ENCODE measurements at regions of chr5 and their contacts with region 1.

Region 1: DNA sequence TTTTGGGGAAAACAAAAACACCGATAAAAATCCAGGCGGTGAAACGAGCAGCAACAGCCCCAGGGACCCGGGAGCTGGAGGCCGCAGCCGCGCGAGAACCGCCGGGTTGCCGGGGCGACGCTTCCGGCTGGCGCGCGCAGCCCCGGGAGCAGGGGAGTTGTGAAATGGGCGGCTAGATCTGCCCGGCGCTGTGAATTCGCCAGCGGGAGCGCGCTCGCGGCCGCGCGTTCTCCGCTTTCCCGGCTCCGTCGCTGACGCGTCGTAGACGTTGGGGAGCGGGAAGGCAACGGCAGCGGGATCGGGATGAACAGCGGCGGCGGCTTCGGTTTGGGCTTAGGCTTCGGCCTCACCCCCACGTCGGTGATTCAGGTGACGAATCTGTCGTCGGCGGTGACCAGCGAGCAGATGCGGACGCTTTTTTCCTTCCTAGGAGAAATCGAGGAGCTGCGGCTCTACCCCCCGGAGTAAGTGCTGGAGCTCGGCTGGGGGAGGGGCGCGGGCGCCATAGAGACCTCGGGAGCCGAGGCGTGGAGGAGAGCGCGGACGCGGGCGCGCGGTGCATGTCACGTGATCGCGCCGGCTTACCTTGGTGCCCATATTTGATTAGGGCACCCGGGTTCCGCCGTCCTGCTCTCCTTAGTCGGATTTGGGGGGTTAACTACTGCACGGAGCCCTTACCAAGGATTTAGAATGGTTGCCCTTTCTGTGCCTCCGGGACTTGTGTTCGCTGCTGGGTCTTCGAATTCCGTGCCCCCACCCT is at the start of gene SREK1:
- DNase-seq: peak; percentile 76 to 94 (median 84)
- ATAC-seq: peak; percentile 84
- H3K4me3 ChIP-seq: peak within 1 kb of the TSS; percentile 94
- H3K4me3 Mint-ChIP-seq: peak within 1 kb of the TSS; percentile 100
- H3K27ac ChIP-seq: peak within 1 kb of the TSS; percentile 97 to 100
- H3K27ac Mint-ChIP-seq: peak within 1 kb of the TSS; percentile 100
- H3K4me1 ChIP-seq: peaks cover 10% of the 10 kb centered on the region
- H3K4me1 Mint-ChIP-seq: peaks cover 49% of the 10 kb centered on the region
- H3K27me3 ChIP-seq: no peaks in the 10 kb centered on the region
- H3K27me3 Mint-ChIP-seq: no peaks in the 10 kb centered on the region
- CTCF ChIP-seq: no peak
- total RNA-seq, gene SREK1: 137 to 155 TPM

Region 2: GRCh38 chr5:65624571-65625555 is 519.4 kb before region 1 on chr5 and contains the starts of genes SHLD3 and TRAPPC13:
- CTCF ChIA-PET with region 1: no interaction called
- POLR2A ChIA-PET with region 1: interaction called, 8 read pairs
- intact Hi-C with region 1: loop called in 1 of 2 experiments (anchors 5 kb)
- DNase-seq: peak; percentile 67 to 94 (median 76)
- ATAC-seq: peak; percentile 72
- H3K4me3 ChIP-seq: peak within 1 kb of the TSS; percentile 67
- H3K4me3 Mint-ChIP-seq: peak within 1 kb of the TSS; percentile 99
- H3K27ac ChIP-seq: peak within 1 kb of the TSS; percentile 85 to 87
- H3K27ac Mint-ChIP-seq: peak within 1 kb of the TSS; percentile 99
- H3K4me1 ChIP-seq: peaks cover 29% of the 10 kb centered on the region
- H3K4me1 Mint-ChIP-seq: peaks cover 63% of the 10 kb centered on the region
- H3K27me3 ChIP-seq: no peaks in the 10 kb centered on the region
- H3K27me3 Mint-ChIP-seq: no peaks in the 10 kb centered on the region
- CTCF ChIP-seq: peak; percentile 29
- total RNA-seq, gene SHLD3: 11.5 to 11.7 TPM
- total RNA-seq, gene TRAPPC13: 11.2 to 14.4 TPM

Region 3: DNA sequence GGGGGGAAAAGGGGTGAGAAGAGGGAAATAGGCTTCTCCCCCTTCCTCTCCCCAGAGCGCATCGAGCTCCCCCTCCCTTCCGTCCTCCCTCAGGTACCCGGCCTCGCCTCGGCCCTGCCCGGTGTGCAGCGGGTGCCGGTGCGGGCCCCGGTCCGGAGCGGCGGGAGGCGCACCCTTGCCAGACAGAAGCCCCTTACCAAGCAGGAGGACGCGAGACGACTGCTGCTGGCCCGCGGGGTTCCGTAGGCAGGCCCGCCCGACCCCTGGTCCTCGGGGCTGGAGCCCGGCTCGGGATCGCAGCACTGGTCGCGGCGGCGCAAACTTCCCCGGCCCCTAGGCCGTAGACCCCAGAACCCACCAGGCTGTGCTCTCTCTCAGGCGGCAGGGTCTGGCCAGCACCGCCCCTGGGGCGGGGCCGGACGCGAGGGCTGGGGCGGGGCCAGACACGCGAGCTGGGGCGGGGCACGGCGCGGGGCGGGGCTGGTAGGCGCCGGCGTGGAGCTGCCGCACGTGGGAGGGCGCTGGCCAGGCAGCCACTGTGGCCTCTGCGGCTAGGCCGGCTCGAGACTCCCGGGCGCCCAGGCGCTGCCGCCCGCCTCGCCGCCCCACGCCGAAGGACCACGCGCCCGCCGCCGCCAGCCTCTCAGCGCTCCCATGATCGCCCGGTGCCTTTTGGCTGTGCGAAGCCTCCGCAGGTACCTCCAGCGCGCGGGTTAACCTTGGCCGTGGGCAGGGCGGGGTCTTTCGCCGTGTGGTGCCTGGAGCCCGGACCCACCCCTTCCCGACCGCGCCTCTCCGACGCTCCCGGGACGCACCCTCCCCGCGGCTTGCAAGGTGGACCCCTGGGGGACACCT is 422.3 kb before region 1 on chr5 and contains the starts of genes NLN and SGTB:
- CTCF ChIA-PET with region 1: no interaction called
- POLR2A ChIA-PET with region 1: interaction called, 31 read pairs
- intact Hi-C with region 1: loop called (anchors 5 kb)
- DNase-seq: peak; percentile 70 to 92 (median 82)
- ATAC-seq: peak; percentile 86
- H3K4me3 ChIP-seq: peak within 1 kb of the TSS; percentile 88
- H3K4me3 Mint-ChIP-seq: peak within 1 kb of the TSS; percentile 95
- H3K27ac ChIP-seq: peak within 1 kb of the TSS; percentile 83 to 97
- H3K27ac Mint-ChIP-seq: peak within 1 kb of the TSS; percentile 86
- H3K4me1 ChIP-seq: peaks cover 32% of the 10 kb centered on the region
- H3K4me1 Mint-ChIP-seq: peaks cover 26% of the 10 kb centered on the region
- H3K27me3 ChIP-seq: no peaks in the 10 kb centered on the region
- H3K27me3 Mint-ChIP-seq: no peaks in the 10 kb centered on the region
- CTCF ChIP-seq: no peak
- total RNA-seq, gene NLN: 1.4 to 2.5 TPM
- total RNA-seq, gene SGTB: 84.2 to 93.7 TPM

Region 4: DNA sequence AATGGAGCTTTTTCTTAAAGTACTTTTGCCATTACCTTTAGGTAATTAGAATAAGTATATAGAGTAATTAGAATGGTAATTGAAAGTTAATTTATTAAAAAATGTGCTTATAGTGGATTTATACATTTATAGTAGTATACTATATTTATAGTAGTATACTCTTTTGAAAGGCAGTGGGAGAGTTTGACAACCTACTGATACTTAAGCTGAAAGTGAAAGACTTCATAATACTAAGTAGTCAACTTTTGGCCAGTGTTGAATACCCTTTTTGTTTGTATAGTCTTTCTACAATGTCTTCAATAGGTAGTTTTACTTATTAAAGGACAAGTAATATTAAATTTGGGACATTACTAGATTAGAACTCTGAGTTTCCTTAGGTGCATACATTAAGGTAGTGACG is 12.8 kb after region 1 on chr5:
- CTCF ChIA-PET with region 1: no interaction called
- POLR2A ChIA-PET with region 1: interaction called, 12 read pairs
- intact Hi-C with region 1: no loop called
- DNase-seq: no peak
- ATAC-seq: no peak
- H3K4me3 ChIP-seq: no peak overlapping the region
- H3K4me3 Mint-ChIP-seq: no peak overlapping the region
- H3K27ac ChIP-seq: no peak overlapping the region
- H3K27ac Mint-ChIP-seq: no peak overlapping the region
- H3K4me1 ChIP-seq: no peaks in the 10 kb centered on the region
- H3K4me1 Mint-ChIP-seq: peaks cover 24% of the 10 kb centered on the region
- H3K27me3 ChIP-seq: no peaks in the 10 kb centered on the region
- H3K27me3 Mint-ChIP-seq: no peaks in the 10 kb centered on the region
- CTCF ChIP-seq: no peak

Region 5: DNA sequence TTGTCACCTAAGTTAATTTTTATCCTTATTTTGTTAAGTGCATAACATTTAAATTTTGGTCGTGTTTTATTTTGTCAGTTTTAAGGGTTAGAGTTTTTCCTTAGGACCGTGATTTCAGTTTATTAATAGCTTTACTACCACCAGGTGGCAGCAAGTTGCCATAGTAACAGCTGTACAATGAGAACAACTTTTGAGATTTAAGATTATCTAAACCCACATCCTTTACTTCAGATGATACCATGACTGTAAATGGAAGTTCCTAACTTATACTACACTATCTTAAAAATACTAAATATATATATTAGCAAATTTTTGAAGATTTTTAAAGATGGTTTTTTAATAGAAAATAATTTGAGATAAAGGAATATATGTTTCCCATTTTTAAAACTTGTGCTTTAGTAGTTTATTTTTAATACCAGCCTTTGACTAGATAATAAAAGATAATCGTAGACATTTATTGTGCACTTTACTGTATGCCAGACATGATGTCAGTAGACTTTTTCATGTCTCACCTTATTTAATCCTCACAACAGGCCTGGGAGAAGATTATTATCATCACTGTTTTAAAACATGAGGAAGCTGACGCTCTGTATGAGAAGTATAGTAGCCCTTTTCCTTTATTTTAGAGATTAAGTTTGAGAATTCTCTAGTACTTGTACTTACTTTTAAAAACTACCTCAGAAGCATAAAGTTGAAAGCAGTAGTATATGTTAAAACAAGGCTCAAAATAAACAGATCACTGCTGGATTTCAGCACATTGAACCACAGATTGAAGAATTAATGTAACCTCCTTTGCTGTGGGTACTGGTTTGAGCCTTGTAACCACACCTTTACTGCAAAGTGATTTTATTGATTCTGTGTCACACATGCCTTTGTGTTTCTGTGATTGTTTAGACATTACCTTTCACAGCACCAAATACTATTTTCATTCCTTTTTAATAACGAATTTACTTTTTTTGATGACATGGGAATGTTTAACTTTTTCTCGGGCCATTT is 27.4 kb after region 1 on chr5:
- CTCF ChIA-PET with region 1: interaction called, 3 read pairs
- POLR2A ChIA-PET with region 1: interaction called, 10 read pairs
- intact Hi-C with region 1: loop called (anchors 1 to 2 kb)
- DNase-seq: peak; percentile 20 to 89 (median 44)
- ATAC-seq: peak; percentile 68
- H3K4me3 ChIP-seq: no peak overlapping the region
- H3K4me3 Mint-ChIP-seq: peak overlapping the region; percentile 36
- H3K27ac ChIP-seq: peak overlapping the region in 1 of 2 donors; percentile 6
- H3K27ac Mint-ChIP-seq: peak overlapping the region; percentile 85
- H3K4me1 ChIP-seq: no peaks in the 10 kb centered on the region
- H3K4me1 Mint-ChIP-seq: peaks cover 41% of the 10 kb centered on the region
- H3K27me3 ChIP-seq: no peaks in the 10 kb centered on the region
- H3K27me3 Mint-ChIP-seq: no peaks in the 10 kb centered on the region
- CTCF ChIP-seq: peak; percentile 69